Caco-2 (cell line): ENCODE measurements at regions of chrX and their contacts with region 1.

Region 1: GRCh38 chrX:38175140-38175539 is 45.5 kb downstream of the SRPX start:
- DNase-seq: peak; percentile 51 to 57
- H3K4me3 ChIP-seq: no peak overlapping the region
- H3K4me3 Mint-ChIP-seq: no peak overlapping the region
- H3K27ac Mint-ChIP-seq: no peak overlapping the region
- H3K4me1 ChIP-seq: no peaks in the 10 kb centered on the region
- H3K4me1 Mint-ChIP-seq: no peaks in the 10 kb centered on the region
- H3K27me3 ChIP-seq: no peaks in the 10 kb centered on the region
- H3K27me3 Mint-ChIP-seq: peaks cover under 1% of the 10 kb centered on the region
- CTCF ChIP-seq: peak; percentile 53 to 55

Region 2: GRCh38 chrX:37745354-37745753 is 429.8 kb before region 1 on chrX:
- CTCF ChIA-PET with region 1: interaction called, 7 read pairs
- POLR2A ChIA-PET with region 1: no interaction called
- intact Hi-C with region 1: loop called (anchors 1 kb)
- DNase-seq: peak; percentile 61 to 69
- H3K4me3 ChIP-seq: no peak overlapping the region
- H3K4me3 Mint-ChIP-seq: no peak overlapping the region
- H3K27ac Mint-ChIP-seq: no peak overlapping the region
- H3K4me1 ChIP-seq: no peaks in the 10 kb centered on the region
- H3K4me1 Mint-ChIP-seq: no peaks in the 10 kb centered on the region
- H3K27me3 ChIP-seq: no peaks in the 10 kb centered on the region
- H3K27me3 Mint-ChIP-seq: peaks cover 5% of the 10 kb centered on the region
- CTCF ChIP-seq: peak; percentile 63 to 72

Region 3: GRCh38 chrX:37905436-37906147 is 269.5 kb before region 1 on chrX:
- CTCF ChIA-PET with region 1: interaction called, 3 read pairs
- POLR2A ChIA-PET with region 1: no interaction called
- intact Hi-C with region 1: loop called (anchors 5 kb)
- DNase-seq: peak; percentile 70 to 79
- H3K4me3 ChIP-seq: peak overlapping the region; percentile 49
- H3K4me3 Mint-ChIP-seq: peak overlapping the region; percentile 82
- H3K27ac Mint-ChIP-seq: no peak overlapping the region
- H3K4me1 ChIP-seq: no peaks in the 10 kb centered on the region
- H3K4me1 Mint-ChIP-seq: no peaks in the 10 kb centered on the region
- H3K27me3 ChIP-seq: no peaks in the 10 kb centered on the region
- H3K27me3 Mint-ChIP-seq: no peaks in the 10 kb centered on the region
- CTCF ChIP-seq: peak; percentile 9 to 53

Region 4: GRCh38 chrX:37926700-37927099 is 248.4 kb before region 1 on chrX:
- CTCF ChIA-PET with region 1: no interaction called
- POLR2A ChIA-PET with region 1: no interaction called
- intact Hi-C with region 1: loop called (anchors 1 kb)
- DNase-seq: peak in 1 of 2 experiments; percentile 13
- H3K4me3 ChIP-seq: no peak overlapping the region
- H3K4me3 Mint-ChIP-seq: peak overlapping the region; percentile 6
- H3K27ac Mint-ChIP-seq: peak overlapping the region; percentile 34
- H3K4me1 ChIP-seq: no peaks in the 10 kb centered on the region
- H3K4me1 Mint-ChIP-seq: peaks cover 12% of the 10 kb centered on the region
- H3K27me3 ChIP-seq: no peaks in the 10 kb centered on the region
- H3K27me3 Mint-ChIP-seq: no peaks in the 10 kb centered on the region
- CTCF ChIP-seq: peak; percentile 31 to 36

Region 5: GRCh38 chrX:37958525-37959211 is 216.5 kb before region 1 on chrX:
- CTCF ChIA-PET with region 1: no interaction called
- POLR2A ChIA-PET with region 1: no interaction called
- intact Hi-C with region 1: no loop called
- DNase-seq: peak; percentile 46 to 60
- H3K4me3 ChIP-seq: no peak overlapping the region
- H3K4me3 Mint-ChIP-seq: peak overlapping the region; percentile 52
- H3K27ac Mint-ChIP-seq: peak overlapping the region; percentile 66
- H3K4me1 ChIP-seq: peaks cover 21% of the 10 kb centered on the region
- H3K4me1 Mint-ChIP-seq: peaks cover 22% of the 10 kb centered on the region
- H3K27me3 ChIP-seq: no peaks in the 10 kb centered on the region
- H3K27me3 Mint-ChIP-seq: no peaks in the 10 kb centered on the region
- CTCF ChIP-seq: no peak

Region 6: GRCh38 chrX:38357747-38358673 is 182.9 kb after region 1 on chrX:
- CTCF ChIA-PET with region 1: no interaction called
- POLR2A ChIA-PET with region 1: no interaction called
- intact Hi-C with region 1: no loop called
- DNase-seq: no peak
- H3K4me3 ChIP-seq: no peak overlapping the region
- H3K4me3 Mint-ChIP-seq: no peak overlapping the region
- H3K27ac Mint-ChIP-seq: no peak overlapping the region
- H3K4me1 ChIP-seq: no peaks in the 10 kb centered on the region
- H3K4me1 Mint-ChIP-seq: no peaks in the 10 kb centered on the region
- H3K27me3 ChIP-seq: no peaks in the 10 kb centered on the region
- H3K27me3 Mint-ChIP-seq: no peaks in the 10 kb centered on the region
- CTCF ChIP-seq: no peak